BJ (cell line): ENCODE measurements at regions of chr10 and their contacts with region 1.

Region 1: GRCh38 chr10:511101-511848 is 178.2 kb downstream of the DIP2C start:
- DNase-seq: peak; percentile 22
- H3K4me3 ChIP-seq: no peak overlapping the region
- H3K27me3 ChIP-seq: no peaks in the 10 kb centered on the region
- CTCF ChIP-seq: peak; percentile 96

Region 2: GRCh38 chr10:167383-167782 is 343.9 kb before region 1 on chr10:
- CTCF ChIA-PET with region 1: no interaction called
- POLR2A ChIA-PET with region 1: no interaction called
- DNase-seq: no peak
- H3K4me3 ChIP-seq: no peak overlapping the region
- H3K27me3 ChIP-seq: no peaks in the 10 kb centered on the region
- CTCF ChIP-seq: no peak

Region 3: GRCh38 chr10:500876-501275 is 10.4 kb before region 1 on chr10:
- CTCF ChIA-PET with region 1: interaction called, 12 read pairs
- POLR2A ChIA-PET with region 1: no interaction called
- DNase-seq: no peak
- H3K4me3 ChIP-seq: no peak overlapping the region
- H3K27me3 ChIP-seq: no peaks in the 10 kb centered on the region
- CTCF ChIP-seq: no peak

Region 4: GRCh38 chr10:598415-599170 is 87.3 kb after region 1 on chr10:
- CTCF ChIA-PET with region 1: no interaction called
- POLR2A ChIA-PET with region 1: no interaction called
- DNase-seq: peak; percentile 99
- H3K4me3 ChIP-seq: no peak overlapping the region
- H3K27me3 ChIP-seq: no peaks in the 10 kb centered on the region
- CTCF ChIP-seq: no peak

Region 5: GRCh38 chr10:659688-660141 is 148.4 kb after region 1 on chr10:
- CTCF ChIA-PET with region 1: no interaction called
- POLR2A ChIA-PET with region 1: no interaction called
- DNase-seq: peak; percentile 64
- H3K4me3 ChIP-seq: no peak overlapping the region
- H3K27me3 ChIP-seq: no peaks in the 10 kb centered on the region
- CTCF ChIP-seq: no peak

Region 6: DNA sequence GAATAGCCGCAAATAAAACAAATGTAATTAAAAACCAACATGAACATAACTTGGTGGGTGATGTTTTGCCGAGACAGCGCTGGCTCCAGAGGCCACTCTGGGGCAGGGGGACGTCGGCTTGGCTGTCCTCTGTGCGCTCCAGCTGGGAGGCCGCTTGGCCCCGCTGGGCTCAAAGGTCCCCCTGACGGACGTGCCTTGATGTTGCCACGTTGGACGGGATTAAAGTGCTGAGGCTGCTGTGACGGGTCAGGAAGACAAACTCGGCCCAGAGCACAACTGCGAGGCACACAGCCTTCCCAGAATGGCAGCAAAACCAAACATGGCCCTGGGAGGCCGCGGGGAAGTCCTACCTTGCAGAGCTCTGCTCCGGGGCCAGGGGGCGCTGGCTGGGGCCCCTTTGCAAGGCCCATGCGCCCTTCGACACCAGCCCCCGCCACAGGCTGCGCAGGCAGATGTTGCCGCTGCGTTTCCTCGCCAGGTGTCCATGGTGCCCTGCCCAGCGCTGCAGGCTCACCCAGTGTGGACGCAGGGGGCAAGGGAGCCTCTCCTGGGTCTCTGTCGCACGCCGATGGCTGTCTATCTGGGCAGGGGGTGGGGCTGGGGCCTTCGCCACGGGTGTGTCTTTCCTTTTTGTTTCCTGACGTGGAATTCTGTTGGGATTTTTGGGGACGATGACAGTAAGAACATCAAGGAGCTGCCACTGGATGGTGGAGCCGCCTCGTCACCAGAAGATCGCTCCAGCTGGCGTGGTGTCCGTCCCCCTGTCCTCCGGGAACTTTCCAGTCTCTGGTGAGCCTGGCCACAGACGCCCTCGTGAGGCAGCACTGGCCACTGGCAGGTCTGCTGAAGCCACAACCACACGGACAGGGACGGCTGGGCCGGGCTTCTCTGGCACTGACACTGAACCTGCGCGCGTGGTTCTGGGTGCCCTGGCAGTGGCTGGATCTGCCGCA is 277.8 kb after region 1 on chr10:
- CTCF ChIA-PET with region 1: interaction called, 25 read pairs
- POLR2A ChIA-PET with region 1: no interaction called
- DNase-seq: no peak
- H3K4me3 ChIP-seq: peak overlapping the region; percentile 35
- H3K27me3 ChIP-seq: no peaks in the 10 kb centered on the region
- CTCF ChIP-seq: peak; percentile 69

Region 7: DNA sequence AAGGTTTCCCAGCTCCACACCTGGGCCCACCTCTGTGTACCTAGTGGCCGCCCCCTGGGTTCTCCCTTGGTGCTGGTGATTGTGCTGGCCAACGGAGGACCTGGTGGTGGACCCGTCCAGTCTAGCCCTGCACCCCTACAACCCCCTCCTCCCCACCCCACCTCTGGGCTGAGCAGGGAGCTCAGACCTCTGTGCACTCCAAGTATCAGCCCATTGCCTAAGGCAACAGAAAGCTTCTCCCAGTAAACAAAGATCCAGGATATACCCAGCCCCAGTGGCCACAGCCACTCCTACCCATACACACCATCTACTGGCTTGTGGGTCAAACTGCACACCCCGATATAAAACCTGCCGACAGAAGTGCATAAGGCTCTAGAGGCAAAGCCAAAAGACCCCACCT is 283.2 kb after region 1 on chr10:
- CTCF ChIA-PET with region 1: interaction called, 25 read pairs
- POLR2A ChIA-PET with region 1: no interaction called
- DNase-seq: no peak
- H3K4me3 ChIP-seq: no peak overlapping the region
- H3K27me3 ChIP-seq: no peaks in the 10 kb centered on the region
- CTCF ChIP-seq: peak; percentile 59